ENCODE measurements at regions of chr11 and their contacts with region 1.

Region 1: GRCh38 chr11:82701847-82702520 is 31.7 kb downstream of the FAM181B start:
- DNase-seq: peak; percentile 66
- H3K4me3 Mint-ChIP-seq: no peak overlapping the region
- H3K27ac Mint-ChIP-seq: no peak overlapping the region
- H3K4me1 Mint-ChIP-seq: no peaks in the 10 kb centered on the region
- H3K27me3 Mint-ChIP-seq: peaks cover 56% of the 10 kb centered on the region
- CTCF ChIP-seq: peak; percentile 55

Region 2: DNA sequence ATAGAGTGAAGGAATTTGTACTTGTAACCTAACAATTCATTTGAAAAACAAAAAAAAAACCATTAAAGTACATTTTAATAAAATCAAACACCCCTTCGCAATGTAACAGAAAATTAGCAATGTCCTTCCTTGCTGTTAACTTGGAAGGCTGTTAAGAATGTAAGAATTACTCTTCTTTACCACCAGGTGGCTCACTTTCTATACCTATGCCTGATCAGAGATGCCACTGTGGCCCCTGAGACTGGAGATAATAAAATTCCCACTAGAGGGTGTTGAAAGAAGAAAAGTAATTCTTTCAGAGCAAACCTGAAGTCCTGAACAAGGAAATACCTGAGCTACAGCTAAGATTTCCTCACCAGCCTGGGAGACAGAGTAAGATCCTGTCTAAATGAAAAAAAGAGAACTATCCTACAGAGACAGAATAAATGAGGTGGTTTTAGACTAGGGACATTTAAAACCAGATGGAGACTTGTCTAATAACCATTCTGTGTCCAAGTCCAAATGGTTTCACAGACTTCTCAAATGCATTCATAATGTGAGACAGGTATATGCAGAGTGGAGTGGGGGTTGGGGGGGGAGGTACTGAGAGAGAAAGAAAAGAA is 1057.6 kb before region 1 on chr11:
- CTCF ChIA-PET with region 1: interaction called, 39 read pairs
- POLR2A ChIA-PET with region 1: no interaction called
- intact Hi-C with region 1: no loop called
- DNase-seq: peak; percentile 58
- H3K4me3 Mint-ChIP-seq: no peak overlapping the region
- H3K27ac Mint-ChIP-seq: no peak overlapping the region
- H3K4me1 Mint-ChIP-seq: no peaks in the 10 kb centered on the region
- H3K27me3 Mint-ChIP-seq: peaks cover 66% of the 10 kb centered on the region
- CTCF ChIP-seq: peak; percentile 59

Region 3: DNA sequence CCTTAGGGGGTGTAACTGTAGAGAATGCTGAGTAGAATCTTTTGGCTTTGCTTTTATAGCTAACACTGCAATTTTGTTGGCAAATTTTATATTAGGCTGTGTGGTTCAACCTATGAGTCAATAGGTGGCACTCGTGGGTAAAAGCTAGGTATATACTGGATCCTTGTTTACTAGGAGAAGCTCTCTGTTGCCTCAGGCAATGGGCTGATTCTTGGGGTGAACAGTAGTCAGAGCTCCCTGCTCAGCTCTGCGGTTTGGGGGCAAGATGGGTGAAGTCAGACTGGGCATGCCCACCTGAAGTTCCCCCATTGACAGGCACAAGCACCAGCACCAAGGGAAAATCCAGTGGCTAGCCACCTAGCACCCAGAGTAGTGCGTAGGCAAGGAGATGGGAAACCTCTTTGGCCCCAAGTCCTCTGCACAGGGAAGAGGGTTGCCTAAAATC is 207.0 kb before region 1 on chr11:
- CTCF ChIA-PET with region 1: interaction called, 49 read pairs
- POLR2A ChIA-PET with region 1: no interaction called
- intact Hi-C with region 1: no loop called
- DNase-seq: peak; percentile 42
- H3K4me3 Mint-ChIP-seq: no peak overlapping the region
- H3K27ac Mint-ChIP-seq: no peak overlapping the region
- H3K4me1 Mint-ChIP-seq: no peaks in the 10 kb centered on the region
- H3K27me3 Mint-ChIP-seq: peaks cover 28% of the 10 kb centered on the region
- CTCF ChIP-seq: peak; percentile 25

Region 4: DNA sequence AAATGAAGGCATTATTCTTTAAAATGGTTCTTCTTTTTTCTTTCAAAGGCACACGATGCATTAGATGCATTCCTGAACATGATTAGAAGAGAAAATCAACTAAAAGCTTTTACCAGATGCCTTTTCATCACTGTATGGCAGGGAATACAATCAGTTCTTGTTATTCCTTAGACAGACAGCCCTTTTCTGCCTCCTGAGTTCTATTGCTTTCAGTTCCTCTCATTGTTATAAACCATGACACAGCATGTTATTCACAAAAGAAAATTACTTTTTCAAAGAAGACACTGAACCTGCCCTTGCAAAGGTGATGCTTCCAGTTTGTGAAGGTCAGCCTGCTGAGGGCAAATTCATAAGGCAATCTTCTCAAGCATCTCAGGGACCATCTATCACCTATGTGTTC is 38.4 kb before region 1 on chr11:
- CTCF ChIA-PET with region 1: no interaction called
- POLR2A ChIA-PET with region 1: no interaction called
- intact Hi-C with region 1: no loop called
- DNase-seq: no peak
- H3K4me3 Mint-ChIP-seq: no peak overlapping the region
- H3K27ac Mint-ChIP-seq: no peak overlapping the region
- H3K4me1 Mint-ChIP-seq: no peaks in the 10 kb centered on the region
- H3K27me3 Mint-ChIP-seq: peaks cover 66% of the 10 kb centered on the region
- CTCF ChIP-seq: no peak

Region 5: DNA sequence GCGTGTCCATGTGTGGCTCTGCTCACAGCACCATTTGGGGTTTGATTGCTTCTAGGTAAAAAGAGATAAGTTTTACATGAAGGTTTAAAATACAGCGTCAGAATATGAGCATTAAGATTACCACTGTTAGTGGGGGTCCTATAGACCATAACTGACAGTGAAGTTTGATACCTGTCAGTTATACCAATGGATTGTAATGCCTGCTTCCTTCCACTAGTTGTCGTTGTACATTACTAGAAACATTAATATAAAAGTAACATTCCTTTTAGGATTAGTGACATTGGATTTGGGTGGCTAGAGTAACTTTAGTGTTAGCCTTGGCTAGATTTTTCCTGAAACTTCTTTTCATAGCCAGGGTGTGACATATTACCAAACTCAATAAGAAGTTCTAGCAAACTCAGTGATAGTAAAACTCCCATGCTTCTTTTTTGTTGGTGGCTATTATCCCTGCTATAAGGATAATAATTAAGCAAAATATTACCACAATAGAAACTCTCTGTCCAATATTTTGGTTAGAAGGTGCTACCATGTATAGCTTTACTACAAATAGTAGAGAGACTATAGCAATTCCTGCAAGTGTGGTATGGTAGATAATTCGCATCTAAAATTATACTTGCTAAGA is 25.4 kb before region 1 on chr11:
- CTCF ChIA-PET with region 1: interaction called, 73 read pairs
- POLR2A ChIA-PET with region 1: no interaction called
- intact Hi-C with region 1: no loop called
- DNase-seq: peak; percentile 13
- H3K4me3 Mint-ChIP-seq: no peak overlapping the region
- H3K27ac Mint-ChIP-seq: no peak overlapping the region
- H3K4me1 Mint-ChIP-seq: no peaks in the 10 kb centered on the region
- H3K27me3 Mint-ChIP-seq: peaks cover 38% of the 10 kb centered on the region
- CTCF ChIP-seq: peak; percentile 58

Region 6: GRCh38 chr11:82682003-82682751 is 19.8 kb before region 1 on chr11:
- CTCF ChIA-PET with region 1: interaction called, 73 read pairs
- POLR2A ChIA-PET with region 1: no interaction called
- intact Hi-C with region 1: no loop called
- DNase-seq: peak; percentile 80
- H3K4me3 Mint-ChIP-seq: no peak overlapping the region
- H3K27ac Mint-ChIP-seq: no peak overlapping the region
- H3K4me1 Mint-ChIP-seq: peaks cover 7% of the 10 kb centered on the region
- H3K27me3 Mint-ChIP-seq: peaks cover 42% of the 10 kb centered on the region
- CTCF ChIP-seq: peak; percentile 52

Region 7: DNA sequence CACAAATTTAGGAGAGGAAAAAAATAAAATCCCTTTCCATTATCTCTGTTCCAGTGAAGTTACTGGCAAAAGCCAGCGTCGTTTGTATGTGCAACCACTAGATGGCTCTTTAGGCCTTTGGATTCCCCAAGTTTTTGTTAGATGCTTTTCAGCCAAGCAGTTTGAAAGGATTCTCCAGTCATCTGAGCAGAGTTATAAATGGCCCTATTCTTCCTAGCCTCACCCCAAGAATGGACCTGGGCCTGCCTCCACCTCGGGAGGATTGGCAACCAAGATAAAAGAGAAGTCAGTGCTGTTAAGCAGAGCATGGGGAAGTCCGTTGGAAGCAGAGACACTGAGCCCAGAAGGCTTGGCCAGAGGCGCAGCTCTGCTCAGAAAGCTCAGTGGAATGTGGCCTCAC is 16.3 kb after region 1 on chr11:
- CTCF ChIA-PET with region 1: interaction called, 29 read pairs
- POLR2A ChIA-PET with region 1: no interaction called
- intact Hi-C with region 1: no loop called
- DNase-seq: peak; percentile 58
- H3K4me3 Mint-ChIP-seq: no peak overlapping the region
- H3K27ac Mint-ChIP-seq: no peak overlapping the region
- H3K4me1 Mint-ChIP-seq: no peaks in the 10 kb centered on the region
- H3K27me3 Mint-ChIP-seq: no peaks in the 10 kb centered on the region
- CTCF ChIP-seq: peak; percentile 60

Region 8: GRCh38 chr11:82724026-82724425 is 22.0 kb after region 1 on chr11:
- CTCF ChIA-PET with region 1: interaction called, 29 read pairs
- POLR2A ChIA-PET with region 1: no interaction called
- intact Hi-C with region 1: no loop called
- DNase-seq: no peak
- H3K4me3 Mint-ChIP-seq: no peak overlapping the region
- H3K27ac Mint-ChIP-seq: no peak overlapping the region
- H3K4me1 Mint-ChIP-seq: no peaks in the 10 kb centered on the region
- H3K27me3 Mint-ChIP-seq: peaks cover 16% of the 10 kb centered on the region
- CTCF ChIP-seq: no peak

Region 9: DNA sequence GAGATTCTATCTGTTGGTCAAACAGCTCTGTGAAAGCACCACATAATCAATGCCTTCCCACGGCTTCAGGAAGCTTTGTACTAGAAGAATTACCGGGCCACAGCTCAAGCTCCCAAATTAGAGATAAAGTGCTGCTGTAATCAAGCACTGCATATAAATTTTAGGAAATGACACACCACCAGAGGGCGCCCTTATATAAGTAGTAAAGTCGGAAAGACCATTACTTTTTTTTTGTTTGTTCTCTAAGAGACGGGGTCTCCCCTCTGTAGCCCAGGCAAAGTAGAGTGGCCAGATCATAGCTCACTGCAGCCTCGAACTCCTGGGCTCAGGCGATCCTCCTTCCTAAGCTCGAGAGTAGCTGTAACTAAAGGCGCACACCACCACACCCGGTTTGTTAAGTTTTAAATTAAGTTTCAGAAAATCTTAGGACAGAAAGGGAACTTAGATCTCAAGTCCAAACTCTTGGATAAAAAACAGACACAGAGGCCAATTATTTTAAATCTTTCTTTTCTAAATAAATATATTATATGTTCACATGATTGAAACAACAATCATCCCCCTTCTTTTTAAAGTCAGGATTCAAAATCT is 165.6 kb after region 1 on chr11:
- CTCF ChIA-PET with region 1: no interaction called
- POLR2A ChIA-PET with region 1: no interaction called
- intact Hi-C with region 1: no loop called
- DNase-seq: peak; percentile 71
- H3K4me3 Mint-ChIP-seq: no peak overlapping the region
- H3K27ac Mint-ChIP-seq: no peak overlapping the region
- H3K4me1 Mint-ChIP-seq: peaks cover 23% of the 10 kb centered on the region
- H3K27me3 Mint-ChIP-seq: no peaks in the 10 kb centered on the region
- CTCF ChIP-seq: peak; percentile 75

Measured in MCF 10A (cell line).